SK-N-SH (cell line): ENCODE measurements at regions of chr2 and their contacts with region 1.

Region 1: DNA sequence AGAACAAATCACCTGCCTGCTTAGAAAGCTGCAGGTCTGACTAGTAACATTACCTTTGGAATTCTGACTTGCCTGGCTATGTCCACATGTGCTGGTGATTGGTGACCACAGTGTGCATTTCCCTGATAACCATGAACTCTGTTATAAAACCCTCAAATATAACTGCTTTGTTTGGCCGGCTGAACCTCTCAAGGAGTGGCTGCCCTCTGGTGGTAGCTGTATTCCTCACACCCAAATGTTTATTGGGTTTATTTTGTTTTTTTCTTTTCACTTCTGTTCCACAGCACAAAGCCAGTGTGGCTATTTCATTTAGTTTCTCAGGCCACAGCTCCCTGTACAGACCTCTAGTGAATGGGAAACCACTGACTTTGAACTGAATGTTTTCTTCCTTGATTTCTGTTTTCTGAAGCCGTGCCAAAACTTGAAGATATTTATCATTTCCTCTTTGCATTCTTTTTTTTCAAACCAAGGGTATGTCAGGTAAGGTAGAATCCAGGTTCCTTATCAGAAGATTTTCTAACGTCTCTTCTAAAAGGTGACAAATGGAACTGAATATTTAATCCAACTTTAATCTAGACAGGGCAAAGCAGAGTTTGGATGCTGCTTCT is 549.0 kb upstream of the VRK2 start:
- DNase-seq: peak; percentile 35
- H3K4me3 ChIP-seq: no peak overlapping the region; a peak in 1 of 4 replicates
- H3K27ac ChIP-seq: peak overlapping the region in 1 of 2 experiments; percentile 34; a peak in 2 of 4 replicates
- H3K4me1 ChIP-seq: no peaks in the 10 kb centered on the region; a peak in 1 of 4 replicates
- H3K27me3 ChIP-seq: no peaks in the 10 kb centered on the region
- CTCF ChIP-seq: peak; percentile 90
- EP300 ChIP-seq: no peak
- RAD21 ChIP-seq: peak; percentile 81

Region 2: GRCh38 chr2:57479994-57480393 is 17.6 kb before region 1 on chr2:
- CTCF ChIA-PET with region 1: interaction called, 15 read pairs
- POLR2A ChIA-PET with region 1: no interaction called
- DNase-seq: no peak
- H3K4me3 ChIP-seq: no peak overlapping the region
- H3K27ac ChIP-seq: no peak overlapping the region
- H3K4me1 ChIP-seq: no peaks in the 10 kb centered on the region
- H3K27me3 ChIP-seq: no peaks in the 10 kb centered on the region
- CTCF ChIP-seq: no peak
- EP300 ChIP-seq: no peak
- RAD21 ChIP-seq: no peak

Region 3: GRCh38 chr2:57516698-57517340 is 19.2 kb after region 1 on chr2:
- CTCF ChIA-PET with region 1: interaction called, 12 read pairs
- POLR2A ChIA-PET with region 1: no interaction called
- DNase-seq: peak; percentile 19
- H3K4me3 ChIP-seq: peak overlapping the region in 1 of 2 experiments; percentile 20; a peak in 1 of 4 replicates
- H3K27ac ChIP-seq: no peak overlapping the region
- H3K4me1 ChIP-seq: no peaks in the 10 kb centered on the region
- H3K27me3 ChIP-seq: no peaks in the 10 kb centered on the region
- CTCF ChIP-seq: peak; percentile 69
- EP300 ChIP-seq: no peak
- RAD21 ChIP-seq: peak; percentile 76